CD4-positive, alpha-beta memory T cell (primary cell): ENCODE measurements at regions of chr7 and their contacts with region 1.

Region 1: GRCh38 chr7:140230861-140231770 is 54.3 kb upstream of the KDM7A start:
- DNase-seq: peak; percentile 25 to 76 (median 46)
- H3K4me3 ChIP-seq: peak overlapping the region; percentile 50 to 83
- H3K4me3 Mint-ChIP-seq: peak overlapping the region; percentile 92 to 97 (median 94)
- H3K27ac ChIP-seq: peak overlapping the region; percentile 84
- H3K27ac Mint-ChIP-seq: peak overlapping the region; percentile 95 to 100 (median 98)
- H3K4me1 ChIP-seq: peaks cover 24% of the 10 kb centered on the region
- H3K4me1 Mint-ChIP-seq: peaks cover 25 to 51% (median 30%) of the 10 kb centered on the region in 4 donors
- H3K27me3 ChIP-seq: no peaks in the 10 kb centered on the region
- H3K27me3 Mint-ChIP-seq: no peaks in the 10 kb centered on the region

Region 2: GRCh38 chr7:140062528-140063299 is 168.4 kb before region 1 on chr7 and contains the start of gene PARP12:
- CTCF ChIA-PET with region 1: no interaction called
- POLR2A ChIA-PET with region 1: interaction called, 15 read pairs
- intact Hi-C with region 1: loop called (anchors 2 kb)
- DNase-seq: peak; percentile 84 to 89 (median 86)
- H3K4me3 ChIP-seq: peak within 1 kb of the TSS; percentile 54 to 89
- H3K4me3 Mint-ChIP-seq: peak within 1 kb of the TSS; percentile 92 to 96 (median 95)
- H3K27ac ChIP-seq: peak within 1 kb of the TSS; percentile 84
- H3K27ac Mint-ChIP-seq: peak within 1 kb of the TSS; percentile 86 to 99 (median 91)
- H3K4me1 ChIP-seq: peaks cover 45% of the 10 kb centered on the region
- H3K4me1 Mint-ChIP-seq: peaks cover 31 to 56% (median 43%) of the 10 kb centered on the region in 4 donors
- H3K27me3 ChIP-seq: no peaks in the 10 kb centered on the region
- H3K27me3 Mint-ChIP-seq: no peaks in the 10 kb centered on the region
- total RNA-seq, gene PARP12: 91.8 to 96.6 TPM

Region 3: GRCh38 chr7:140196361-140197217 is 34.5 kb before region 1 on chr7:
- CTCF ChIA-PET with region 1: no interaction called
- POLR2A ChIA-PET with region 1: no interaction called
- intact Hi-C with region 1: no loop called
- DNase-seq: no peak
- H3K4me3 ChIP-seq: no peak overlapping the region
- H3K4me3 Mint-ChIP-seq: no peak overlapping the region
- H3K27ac ChIP-seq: no peak overlapping the region
- H3K27ac Mint-ChIP-seq: peak overlapping the region in 1 of 7 donors; percentile 22
- H3K4me1 ChIP-seq: no peaks in the 10 kb centered on the region
- H3K4me1 Mint-ChIP-seq: peaks cover 1 to 17% (median 5%) of the 10 kb centered on the region in 4 donors
- H3K27me3 ChIP-seq: no peaks in the 10 kb centered on the region
- H3K27me3 Mint-ChIP-seq: no peaks in the 10 kb centered on the region

Region 4: GRCh38 chr7:140209866-140210609 is 21.1 kb before region 1 on chr7:
- CTCF ChIA-PET with region 1: interaction called, 6 read pairs
- POLR2A ChIA-PET with region 1: interaction called, 33 read pairs
- intact Hi-C with region 1: no loop called
- DNase-seq: peak in 3 of 5 donors; percentile 22 to 37 (median 30)
- H3K4me3 ChIP-seq: peak overlapping the region in 1 of 2 donors; percentile 21
- H3K4me3 Mint-ChIP-seq: peak overlapping the region; percentile 38 to 86 (median 79)
- H3K27ac ChIP-seq: no peak overlapping the region
- H3K27ac Mint-ChIP-seq: peak overlapping the region; percentile 49 to 91 (median 88)
- H3K4me1 ChIP-seq: peaks cover 55% of the 10 kb centered on the region
- H3K4me1 Mint-ChIP-seq: peaks cover 36 to 65% (median 42%) of the 10 kb centered on the region in 4 donors
- H3K27me3 ChIP-seq: no peaks in the 10 kb centered on the region
- H3K27me3 Mint-ChIP-seq: peaks cover 0 to 2% of the 10 kb centered on the region in 2 donors

Region 5: DNA sequence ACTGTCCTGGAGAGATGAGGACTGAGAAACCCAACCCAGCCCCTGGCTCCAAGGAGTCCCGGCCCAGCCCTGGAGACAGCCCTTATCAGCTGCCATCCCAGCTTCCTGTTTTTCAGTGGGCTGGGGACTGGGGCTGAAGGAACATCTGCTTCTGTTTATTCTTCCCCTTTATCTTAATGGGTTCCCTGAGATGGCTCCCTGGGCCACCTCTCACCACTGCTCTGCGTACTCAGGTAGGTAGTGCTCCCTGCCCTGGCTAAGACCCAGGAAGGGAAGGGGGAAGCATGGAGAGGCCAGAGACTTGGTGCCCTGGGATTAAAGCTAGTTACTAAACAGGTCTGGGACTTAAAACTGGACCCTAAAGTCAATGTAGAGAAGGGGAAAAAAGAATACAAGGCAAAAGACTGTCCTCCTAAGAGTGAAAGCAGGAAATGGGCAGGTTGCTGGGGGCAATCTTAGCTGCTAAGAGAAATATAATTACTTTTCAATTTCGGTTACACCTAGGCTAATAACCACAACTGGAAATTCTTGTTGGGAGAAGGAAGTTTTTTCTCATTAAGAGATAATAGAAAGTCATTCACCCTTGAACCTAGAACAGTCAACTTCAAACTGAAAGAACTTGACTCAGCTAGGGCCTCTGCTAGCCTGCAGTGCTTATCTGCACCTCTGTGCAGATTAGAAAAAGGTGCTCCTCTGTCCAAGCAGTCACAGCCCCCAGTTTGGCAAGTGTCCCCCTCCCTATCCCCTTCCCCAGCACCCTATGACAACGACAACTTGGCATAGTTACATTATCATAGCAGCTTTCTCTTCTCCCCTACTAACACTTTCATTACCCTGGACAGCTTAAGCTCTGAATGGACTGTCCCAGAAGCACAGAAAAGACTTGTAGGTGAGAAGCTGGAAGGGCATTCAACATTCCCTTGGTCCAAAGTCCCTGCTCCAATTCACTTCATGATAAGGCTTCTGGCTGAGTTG is 11.2 kb after region 1 on chr7:
- CTCF ChIA-PET with region 1: interaction called, 4 read pairs
- POLR2A ChIA-PET with region 1: interaction called, 19 read pairs
- intact Hi-C with region 1: no loop called
- DNase-seq: no peak
- H3K4me3 ChIP-seq: no peak overlapping the region
- H3K4me3 Mint-ChIP-seq: no peak overlapping the region
- H3K27ac ChIP-seq: no peak overlapping the region
- H3K27ac Mint-ChIP-seq: peak overlapping the region in 3 of 7 donors; percentile 41 to 42 (median 42)
- H3K4me1 ChIP-seq: peaks cover 9% of the 10 kb centered on the region
- H3K4me1 Mint-ChIP-seq: peaks cover 4 to 11% (median 6%) of the 10 kb centered on the region in 4 donors
- H3K27me3 ChIP-seq: no peaks in the 10 kb centered on the region
- H3K27me3 Mint-ChIP-seq: peaks cover 0 to 1% of the 10 kb centered on the region in 2 donors

Region 6: DNA sequence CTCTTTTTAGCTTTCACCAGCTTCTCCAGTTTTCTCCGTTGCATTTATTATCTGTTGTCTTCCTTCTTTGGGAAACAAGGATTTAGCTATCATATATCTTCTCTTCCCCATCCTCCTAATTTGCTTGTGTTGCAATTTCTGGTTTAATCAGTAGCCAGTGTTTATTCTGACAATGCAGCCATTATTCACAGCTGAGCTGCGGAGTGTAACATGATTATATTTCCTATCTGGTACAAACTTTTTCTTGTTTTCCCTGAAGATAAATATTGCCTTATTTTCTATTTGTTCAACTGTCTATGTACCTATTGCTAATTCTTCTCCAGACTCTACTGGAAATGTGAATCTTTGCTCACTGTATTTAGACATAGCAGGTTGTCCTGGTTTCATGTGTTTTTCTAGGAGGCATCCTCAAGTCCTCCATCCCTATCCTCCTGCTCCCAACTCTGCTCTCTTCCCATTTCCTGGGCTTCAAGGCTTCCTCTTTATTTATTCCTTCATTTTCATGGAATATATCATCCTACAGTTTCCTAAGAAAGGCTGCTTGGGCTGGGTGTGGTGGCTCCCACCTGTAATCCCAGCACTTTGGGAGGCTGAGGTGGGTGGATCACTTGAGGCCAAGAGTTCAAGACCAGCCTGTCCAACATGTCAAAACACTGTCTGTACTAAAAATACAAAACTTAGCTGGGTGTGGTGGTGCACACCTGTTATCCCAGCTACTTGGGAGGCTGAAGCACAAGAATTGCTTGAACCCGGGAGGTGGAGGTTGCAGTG is 18.1 kb after region 1 on chr7:
- CTCF ChIA-PET with region 1: interaction called, 4 read pairs
- POLR2A ChIA-PET with region 1: interaction called, 47 read pairs
- intact Hi-C with region 1: loop called (anchors 1 kb)
- DNase-seq: no peak
- H3K4me3 ChIP-seq: no peak overlapping the region
- H3K4me3 Mint-ChIP-seq: no peak overlapping the region
- H3K27ac ChIP-seq: no peak overlapping the region
- H3K27ac Mint-ChIP-seq: no peak overlapping the region
- H3K4me1 ChIP-seq: peaks cover 23% of the 10 kb centered on the region
- H3K4me1 Mint-ChIP-seq: peaks cover 14 to 24% (median 17%) of the 10 kb centered on the region in 4 donors
- H3K27me3 ChIP-seq: no peaks in the 10 kb centered on the region
- H3K27me3 Mint-ChIP-seq: peaks cover 0 to 1% of the 10 kb centered on the region in 2 donors

Region 7: DNA sequence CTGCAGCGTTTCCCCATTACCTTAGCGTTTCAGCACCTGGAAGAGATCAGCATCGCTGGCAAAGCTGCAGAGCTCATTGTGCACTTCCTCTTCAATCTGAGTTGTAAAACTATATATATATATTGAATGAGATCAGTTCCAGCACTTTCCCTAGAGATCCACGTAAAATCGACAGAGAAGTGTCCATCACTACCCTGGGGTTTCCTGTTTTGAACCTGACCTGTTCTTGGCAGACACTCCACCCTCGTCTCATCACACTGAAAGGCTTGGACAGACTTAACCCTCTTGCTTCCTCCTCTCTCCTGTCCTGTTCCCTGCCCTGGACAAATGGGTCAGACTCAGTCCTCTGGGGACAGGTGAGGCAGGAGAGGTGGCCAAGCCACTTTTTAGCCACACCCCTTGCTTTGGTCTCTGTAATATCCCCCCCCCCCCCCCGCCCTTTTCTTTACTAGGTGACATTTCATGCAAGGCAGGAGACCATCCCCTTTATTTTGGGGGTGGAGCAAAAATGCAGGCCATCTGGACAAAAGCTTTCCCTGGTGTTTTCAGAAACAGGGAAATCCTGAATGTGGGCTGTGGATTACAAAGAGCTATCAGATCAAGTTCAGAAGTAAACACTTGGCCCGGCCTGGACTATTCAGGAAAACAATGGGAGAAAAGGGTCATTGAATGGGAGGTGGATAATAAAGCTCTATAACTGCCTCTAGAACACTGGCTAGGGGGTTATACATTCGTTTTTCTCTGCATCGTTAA is 29.4 kb after region 1 on chr7:
- CTCF ChIA-PET with region 1: interaction called, 4 read pairs
- POLR2A ChIA-PET with region 1: interaction called, 36 read pairs
- intact Hi-C with region 1: loop called (anchors 2 kb)
- DNase-seq: no peak
- H3K4me3 ChIP-seq: no peak overlapping the region
- H3K4me3 Mint-ChIP-seq: no peak overlapping the region
- H3K27ac ChIP-seq: no peak overlapping the region
- H3K27ac Mint-ChIP-seq: peak overlapping the region in 3 of 7 donors; percentile 15 to 47 (median 35)
- H3K4me1 ChIP-seq: peaks cover 25% of the 10 kb centered on the region
- H3K4me1 Mint-ChIP-seq: peaks cover 18 to 34% (median 27%) of the 10 kb centered on the region in 4 donors
- H3K27me3 ChIP-seq: no peaks in the 10 kb centered on the region
- H3K27me3 Mint-ChIP-seq: no peaks in the 10 kb centered on the region

Region 8: DNA sequence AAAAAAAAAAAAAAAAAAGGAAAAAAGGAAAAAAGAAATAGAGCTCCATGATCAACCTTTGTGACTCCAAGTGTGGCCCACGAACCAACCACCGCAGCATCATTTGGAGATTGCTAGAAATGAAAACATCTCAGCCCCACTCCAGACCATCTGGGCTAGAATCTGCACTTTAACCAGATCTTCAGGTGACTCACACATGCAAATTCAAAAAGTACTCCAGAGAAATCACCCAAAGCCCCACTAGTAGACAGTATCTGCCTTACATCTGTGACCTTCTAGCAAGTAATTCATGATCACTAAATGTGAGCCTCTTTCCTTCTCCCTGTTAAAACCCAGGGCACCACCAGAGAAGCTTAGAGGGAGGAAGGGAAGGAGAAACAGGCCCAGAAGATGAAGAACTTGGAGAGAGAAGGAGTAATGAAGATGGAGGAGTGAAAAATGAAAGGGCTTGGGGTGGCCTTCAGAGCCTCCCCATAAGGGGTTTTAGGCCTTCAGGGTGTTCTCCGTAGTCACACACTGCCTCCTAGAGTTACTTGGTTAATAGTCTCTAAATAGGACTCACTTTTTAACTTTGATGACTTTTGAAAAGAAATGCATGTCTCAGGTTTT is 73.2 kb after region 1 on chr7:
- CTCF ChIA-PET with region 1: interaction called, 8 read pairs
- POLR2A ChIA-PET with region 1: interaction called, 13 read pairs
- intact Hi-C with region 1: loop called (anchors 1 kb)
- DNase-seq: peak; percentile 39 to 67 (median 56)
- H3K4me3 ChIP-seq: no peak overlapping the region
- H3K4me3 Mint-ChIP-seq: no peak overlapping the region
- H3K27ac ChIP-seq: no peak overlapping the region
- H3K27ac Mint-ChIP-seq: peak overlapping the region in 5 of 7 donors; percentile 35 to 72 (median 63)
- H3K4me1 ChIP-seq: no peaks in the 10 kb centered on the region
- H3K4me1 Mint-ChIP-seq: peaks cover 4 to 7% (median 5%) of the 10 kb centered on the region in 4 donors
- H3K27me3 ChIP-seq: no peaks in the 10 kb centered on the region
- H3K27me3 Mint-ChIP-seq: peaks cover under 1% of the 10 kb centered on the region in 2 donors